ENCODE measurements at regions of chr14 and their contacts with region 1.

Region 1: DNA sequence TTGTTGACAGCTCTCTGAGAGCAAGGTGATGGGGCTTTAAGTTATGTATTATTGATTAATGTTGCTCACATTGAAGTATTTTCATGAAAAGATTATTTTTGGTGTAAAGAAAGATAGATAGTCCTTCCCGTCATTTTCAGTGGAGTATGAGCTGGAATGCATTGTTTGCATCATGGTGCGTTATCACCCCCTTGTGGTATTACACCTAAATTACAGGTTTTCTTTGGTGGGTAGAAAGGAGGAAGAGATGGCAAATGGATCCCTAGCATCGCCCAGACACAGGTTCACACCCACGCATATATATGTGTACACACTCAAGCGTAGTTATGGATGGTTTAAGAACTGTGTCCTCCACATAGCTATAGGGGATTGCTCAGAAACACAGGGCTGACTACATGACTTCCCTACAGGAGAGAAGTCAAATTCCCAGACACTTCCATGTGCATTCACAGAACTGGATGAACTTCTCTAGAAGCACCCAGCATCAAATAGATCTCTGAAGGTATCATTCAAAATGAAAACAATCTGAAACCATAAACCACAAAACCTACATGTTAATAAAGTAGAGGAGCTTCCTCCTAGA is 14.4 kb upstream of the SERPINA10 start:
- DNase-seq: peak; percentile 50
- ATAC-seq: peak; percentile 65
- H3K4me3 ChIP-seq: no peak overlapping the region
- H3K27ac ChIP-seq: no peak overlapping the region
- H3K4me1 ChIP-seq: peaks cover 18% of the 10 kb centered on the region
- H3K27me3 ChIP-seq: no peaks in the 10 kb centered on the region
- CTCF ChIP-seq: peak; percentile 88
- EP300 ChIP-seq: no peak
- POLR2A ChIP-seq: no peak
- RAD21 ChIP-seq: peak; percentile 80

Region 2: GRCh38 chr14:94036313-94037050 is 271.0 kb before region 1 on chr14:
- CTCF ChIA-PET with region 1: no interaction called
- POLR2A ChIA-PET with region 1: no interaction called
- in situ Hi-C with region 1: no loop called
- intact Hi-C with region 1: loop called (anchors 1 kb)
- DNase-seq: peak; percentile 73
- ATAC-seq: peak; percentile 90
- H3K4me3 ChIP-seq: no peak overlapping the region
- H3K27ac ChIP-seq: no peak overlapping the region
- H3K4me1 ChIP-seq: peaks cover 43% of the 10 kb centered on the region
- H3K27me3 ChIP-seq: no peaks in the 10 kb centered on the region
- CTCF ChIP-seq: peak; percentile 91
- EP300 ChIP-seq: no peak
- POLR2A ChIP-seq: no peak
- RAD21 ChIP-seq: peak; percentile 77

Region 3: GRCh38 chr14:94051115-94051514 is 256.4 kb before region 1 on chr14:
- CTCF ChIA-PET with region 1: interaction called, 3 read pairs
- POLR2A ChIA-PET with region 1: no interaction called
- in situ Hi-C with region 1: loop called (anchors 10 kb)
- intact Hi-C with region 1: no loop called
- DNase-seq: no peak
- ATAC-seq: peak; percentile 39; the same call in 2 of the 3 replicates
- H3K4me3 ChIP-seq: no peak overlapping the region
- H3K27ac ChIP-seq: no peak overlapping the region
- H3K4me1 ChIP-seq: peaks cover 11% of the 10 kb centered on the region
- H3K27me3 ChIP-seq: no peaks in the 10 kb centered on the region
- CTCF ChIP-seq: peak; percentile 60
- EP300 ChIP-seq: no peak
- POLR2A ChIP-seq: no peak
- RAD21 ChIP-seq: no peak

Region 4: GRCh38 chr14:94129111-94129757 is 178.3 kb before region 1 on chr14 and contains the start of gene IFI27L2:
- CTCF ChIA-PET with region 1: interaction called, 14 read pairs
- POLR2A ChIA-PET with region 1: no interaction called
- in situ Hi-C with region 1: no loop called
- intact Hi-C with region 1: loop called (anchors 1 kb)
- DNase-seq: peak; percentile 40
- ATAC-seq: peak; percentile 84
- H3K4me3 ChIP-seq: peak within 1 kb of the TSS; percentile 46 to 72 (median 53)
- H3K27ac ChIP-seq: no peak within 1 kb of the TSS
- H3K4me1 ChIP-seq: peaks cover 23% of the 10 kb centered on the region
- H3K27me3 ChIP-seq: peaks cover 2 to 17% of the 10 kb centered on the region in 2 experiments
- CTCF ChIP-seq: 0 out of 2 replicates have a peak, but pooled peaks have one; percentile 9
- EP300 ChIP-seq: no peak
- POLR2A ChIP-seq: no peak
- RAD21 ChIP-seq: no peak
- total RNA-seq, gene IFI27L2: 4.3 and 6.0 TPM in 2 replicates

Region 5: GRCh38 chr14:94180655-94181271 is 126.7 kb before region 1 on chr14:
- CTCF ChIA-PET with region 1: interaction called, 5 read pairs
- POLR2A ChIA-PET with region 1: interaction called, 3 read pairs
- in situ Hi-C with region 1: no loop called
- intact Hi-C with region 1: loop called (anchors 1 kb)
- DNase-seq: peak; percentile 67
- ATAC-seq: peak; percentile 94
- H3K4me3 ChIP-seq: peak overlapping the region in 2 of 3 experiments; percentile 28 to 47; a peak in 2 of 6 replicates
- H3K27ac ChIP-seq: peak overlapping the region; percentile 52
- H3K4me1 ChIP-seq: peaks cover 66% of the 10 kb centered on the region
- H3K27me3 ChIP-seq: no peaks in the 10 kb centered on the region
- CTCF ChIP-seq: peak; percentile 66
- EP300 ChIP-seq: no peak
- POLR2A ChIP-seq: no peak
- RAD21 ChIP-seq: peak; percentile 38; the same call in 1 of the 2 replicates

Region 6: DNA sequence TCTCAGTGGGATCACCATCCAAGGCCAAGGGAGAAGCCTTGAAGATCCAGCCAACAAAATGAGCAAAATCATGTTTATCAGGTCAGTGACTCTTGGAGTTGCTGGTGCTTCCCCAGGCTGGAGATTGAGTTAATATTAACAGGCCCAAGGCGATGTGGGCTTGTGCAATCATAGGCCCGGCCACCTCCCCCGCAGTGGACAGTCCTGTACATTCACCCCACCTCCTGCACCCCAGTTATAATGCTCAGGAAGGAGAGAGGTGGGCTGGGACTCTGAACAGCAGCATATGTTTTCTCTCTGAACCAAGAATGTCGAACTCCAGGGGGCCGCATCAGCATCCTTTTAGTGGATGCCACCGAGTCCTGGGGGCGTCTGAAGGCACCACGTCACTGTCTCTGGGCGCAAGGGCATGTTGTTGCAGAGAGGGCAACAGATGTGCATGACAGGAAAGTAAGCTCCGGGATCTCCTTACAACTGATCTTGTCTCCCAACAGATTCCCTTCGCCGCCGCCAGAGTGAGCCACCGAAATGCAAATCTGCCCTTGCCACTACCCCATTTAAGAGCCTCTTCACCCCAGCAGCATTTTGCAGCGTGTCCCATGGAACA is 47.8 kb after region 1 on chr14:
- CTCF ChIA-PET with region 1: no interaction called
- POLR2A ChIA-PET with region 1: no interaction called
- in situ Hi-C with region 1: no loop called
- intact Hi-C with region 1: no loop called
- DNase-seq: peak; percentile 85
- ATAC-seq: peak; percentile 95
- H3K4me3 ChIP-seq: peak overlapping the region; percentile 40 to 65 (median 44); a peak in 5 of 6 replicates
- H3K27ac ChIP-seq: peak overlapping the region; percentile 63
- H3K4me1 ChIP-seq: peaks cover 61% of the 10 kb centered on the region
- H3K27me3 ChIP-seq: no peaks in the 10 kb centered on the region
- CTCF ChIP-seq: peak; percentile 88
- EP300 ChIP-seq: peak in 1 of 2 experiments; percentile 54; a peak in 2 of 4 replicates
- POLR2A ChIP-seq: peak in 1 of 2 experiments; percentile 34; a peak in 1 of 4 replicates
- RAD21 ChIP-seq: peak; percentile 80